Caco-2 (cell line): ENCODE measurements at regions of chr2 and their contacts with region 1.

Region 1: GRCh38 chr2:21270708-21271122 is 146.9 kb downstream of the TDRD15 start:
- DNase-seq: peak; percentile 25 to 44
- H3K4me3 ChIP-seq: no peak overlapping the region
- H3K4me3 Mint-ChIP-seq: peak overlapping the region; percentile 44
- H3K27ac Mint-ChIP-seq: peak overlapping the region; percentile 92
- H3K4me1 ChIP-seq: peaks cover 53% of the 10 kb centered on the region
- H3K4me1 Mint-ChIP-seq: peaks cover 63% of the 10 kb centered on the region
- H3K27me3 ChIP-seq: no peaks in the 10 kb centered on the region
- H3K27me3 Mint-ChIP-seq: no peaks in the 10 kb centered on the region
- CTCF ChIP-seq: no peak

Region 2: DNA sequence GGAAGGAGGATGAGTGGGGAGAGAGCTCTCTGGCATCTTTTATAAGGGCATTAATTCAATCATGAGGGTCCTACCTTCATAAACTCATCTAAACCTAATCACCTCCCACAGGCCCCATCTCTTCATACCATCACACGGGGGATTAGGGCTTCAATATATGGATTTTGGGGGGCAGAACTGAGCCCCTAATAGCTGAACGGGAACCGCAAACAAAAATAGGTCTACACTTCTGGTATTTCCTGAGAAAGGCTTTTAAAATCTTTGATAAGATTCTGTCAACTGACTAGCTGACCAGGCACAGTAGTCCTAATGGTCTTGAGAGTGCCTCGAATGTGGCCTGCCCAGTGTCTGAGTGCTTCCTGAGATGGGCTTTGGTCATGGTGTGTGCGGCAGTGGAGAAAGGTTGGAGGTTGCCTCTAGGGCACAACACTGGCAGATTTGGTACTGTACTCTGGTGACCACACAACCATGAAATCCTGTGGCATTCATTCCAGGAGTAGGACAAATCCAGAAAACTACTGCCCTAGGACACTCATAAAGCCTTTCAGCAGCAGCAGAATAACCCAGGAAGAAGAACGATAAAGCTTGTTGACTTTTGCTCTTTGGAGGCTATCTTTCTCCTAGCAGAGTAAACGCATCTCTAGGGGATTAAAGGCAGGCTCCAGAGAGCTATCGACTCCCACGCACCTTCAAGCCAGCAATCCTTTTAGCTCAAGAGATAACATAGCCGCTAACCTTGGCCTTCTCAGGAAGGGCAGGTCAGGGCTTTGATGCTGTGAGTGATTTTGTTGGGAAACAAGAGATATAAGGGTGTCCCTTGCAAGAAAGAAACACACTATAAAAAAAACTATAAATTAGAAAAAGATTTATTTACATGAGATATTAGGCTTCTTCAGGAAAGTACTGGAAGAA is 214.6 kb before region 1 on chr2:
- CTCF ChIA-PET with region 1: no interaction called
- POLR2A ChIA-PET with region 1: no interaction called
- intact Hi-C with region 1: loop called (anchors 5 kb)
- DNase-seq: peak; percentile 62 to 77
- H3K4me3 ChIP-seq: no peak overlapping the region
- H3K4me3 Mint-ChIP-seq: no peak overlapping the region
- H3K27ac Mint-ChIP-seq: no peak overlapping the region
- H3K4me1 ChIP-seq: peaks cover 21% of the 10 kb centered on the region
- H3K4me1 Mint-ChIP-seq: peaks cover 7% of the 10 kb centered on the region
- H3K27me3 ChIP-seq: no peaks in the 10 kb centered on the region
- H3K27me3 Mint-ChIP-seq: no peaks in the 10 kb centered on the region
- CTCF ChIP-seq: no peak

Region 3: DNA sequence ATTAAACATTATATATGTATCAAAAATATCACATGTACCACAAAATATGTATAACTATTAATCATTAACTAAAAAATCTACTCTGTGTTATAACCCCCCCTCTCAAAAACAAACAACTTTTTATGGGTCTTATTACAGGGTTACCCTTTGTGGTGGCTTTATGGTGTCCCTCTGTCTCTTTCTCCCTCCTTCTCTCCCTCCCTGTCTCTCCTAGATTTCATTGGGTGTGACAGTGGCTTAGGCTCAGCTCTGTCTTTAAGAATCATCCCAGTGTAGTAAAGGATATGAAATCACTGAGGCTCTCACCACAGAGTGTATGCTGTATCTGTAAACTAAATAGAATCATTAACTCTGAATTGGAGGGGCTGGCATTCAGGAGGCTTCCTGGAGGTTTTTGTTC is 53.3 kb before region 1 on chr2:
- CTCF ChIA-PET with region 1: no interaction called
- POLR2A ChIA-PET with region 1: no interaction called
- intact Hi-C with region 1: no loop called
- DNase-seq: peak in 1 of 2 experiments; percentile 2
- H3K4me3 ChIP-seq: no peak overlapping the region
- H3K4me3 Mint-ChIP-seq: no peak overlapping the region
- H3K27ac Mint-ChIP-seq: no peak overlapping the region
- H3K4me1 ChIP-seq: peaks cover 10% of the 10 kb centered on the region
- H3K4me1 Mint-ChIP-seq: peaks cover 15% of the 10 kb centered on the region
- H3K27me3 ChIP-seq: no peaks in the 10 kb centered on the region
- H3K27me3 Mint-ChIP-seq: no peaks in the 10 kb centered on the region
- CTCF ChIP-seq: no peak

Region 4: DNA sequence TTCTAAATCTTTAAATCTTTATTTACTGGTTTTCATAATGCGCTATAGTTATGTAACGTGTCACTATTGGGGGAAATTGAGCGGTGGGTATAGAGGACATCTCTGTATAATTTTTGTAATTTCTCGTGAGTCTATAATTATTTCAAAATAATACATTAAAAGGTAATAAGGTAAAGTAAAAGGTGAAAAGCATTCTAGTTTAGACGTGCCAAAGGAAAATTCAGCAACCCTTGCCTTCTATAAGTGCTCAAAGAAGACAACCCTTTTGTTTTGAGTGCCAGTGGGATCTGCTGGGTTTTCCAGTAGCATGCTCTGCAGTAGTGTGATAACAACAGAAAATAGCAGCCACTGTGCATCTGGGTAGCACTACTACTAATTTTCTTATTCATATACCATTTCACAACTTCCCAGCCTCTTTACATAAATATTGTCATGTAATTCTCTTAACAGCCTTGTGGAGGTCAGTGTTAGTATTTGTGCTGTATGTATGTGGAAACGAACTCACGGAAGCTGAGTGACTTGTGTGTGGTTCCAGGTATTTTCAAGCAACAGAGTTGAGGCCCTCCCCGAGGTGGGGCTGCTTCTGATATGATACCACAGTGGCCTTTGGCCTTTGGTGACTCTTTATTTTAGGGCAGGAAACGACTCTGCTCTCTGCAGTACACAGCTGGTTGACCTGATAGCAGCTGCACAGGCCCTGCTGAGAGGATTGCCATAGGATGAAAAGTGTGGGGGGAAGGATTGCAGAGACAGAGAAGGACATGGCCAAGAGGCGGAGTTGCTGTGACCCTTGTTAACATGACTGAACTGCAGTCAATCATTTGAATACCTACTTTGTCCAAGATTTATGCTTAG is 42.4 kb before region 1 on chr2:
- CTCF ChIA-PET with region 1: no interaction called
- POLR2A ChIA-PET with region 1: no interaction called
- intact Hi-C with region 1: loop called (anchors 5 kb)
- DNase-seq: peak; percentile 16 to 48
- H3K4me3 ChIP-seq: no peak overlapping the region
- H3K4me3 Mint-ChIP-seq: no peak overlapping the region
- H3K27ac Mint-ChIP-seq: peak overlapping the region; percentile 31
- H3K4me1 ChIP-seq: peaks cover 16% of the 10 kb centered on the region
- H3K4me1 Mint-ChIP-seq: peaks cover 7% of the 10 kb centered on the region
- H3K27me3 ChIP-seq: no peaks in the 10 kb centered on the region
- H3K27me3 Mint-ChIP-seq: no peaks in the 10 kb centered on the region
- CTCF ChIP-seq: no peak

Region 5: GRCh38 chr2:21288739-21289520 is 18.2 kb after region 1 on chr2:
- CTCF ChIA-PET with region 1: no interaction called
- POLR2A ChIA-PET with region 1: interaction called, 4 read pairs
- intact Hi-C with region 1: loop called (anchors 1 kb)
- DNase-seq: no peak
- H3K4me3 ChIP-seq: no peak overlapping the region
- H3K4me3 Mint-ChIP-seq: no peak overlapping the region
- H3K27ac Mint-ChIP-seq: no peak overlapping the region
- H3K4me1 ChIP-seq: peaks cover 23% of the 10 kb centered on the region
- H3K4me1 Mint-ChIP-seq: peaks cover 12% of the 10 kb centered on the region
- H3K27me3 ChIP-seq: no peaks in the 10 kb centered on the region
- H3K27me3 Mint-ChIP-seq: no peaks in the 10 kb centered on the region
- CTCF ChIP-seq: no peak

Region 6: GRCh38 chr2:21307037-21307436 is 36.3 kb after region 1 on chr2:
- CTCF ChIA-PET with region 1: interaction called, 7 read pairs
- POLR2A ChIA-PET with region 1: no interaction called
- intact Hi-C with region 1: loop called (anchors 1 kb)
- DNase-seq: peak; percentile 64 to 73
- H3K4me3 ChIP-seq: no peak overlapping the region
- H3K4me3 Mint-ChIP-seq: no peak overlapping the region
- H3K27ac Mint-ChIP-seq: no peak overlapping the region
- H3K4me1 ChIP-seq: peaks cover 35% of the 10 kb centered on the region
- H3K4me1 Mint-ChIP-seq: peaks cover under 1% of the 10 kb centered on the region
- H3K27me3 ChIP-seq: no peaks in the 10 kb centered on the region; the same call in 1 of the 2 replicates
- H3K27me3 Mint-ChIP-seq: no peaks in the 10 kb centered on the region
- CTCF ChIP-seq: no peak

Region 7: GRCh38 chr2:21317131-21317530 is 46.4 kb after region 1 on chr2:
- CTCF ChIA-PET with region 1: interaction called, 12 read pairs
- POLR2A ChIA-PET with region 1: no interaction called
- intact Hi-C with region 1: loop called (anchors 2 kb)
- DNase-seq: peak; percentile 48 to 70
- H3K4me3 ChIP-seq: no peak overlapping the region
- H3K4me3 Mint-ChIP-seq: no peak overlapping the region
- H3K27ac Mint-ChIP-seq: peak overlapping the region; percentile 57
- H3K4me1 ChIP-seq: peaks cover 14% of the 10 kb centered on the region
- H3K4me1 Mint-ChIP-seq: peaks cover 10% of the 10 kb centered on the region
- H3K27me3 ChIP-seq: no peaks in the 10 kb centered on the region
- H3K27me3 Mint-ChIP-seq: no peaks in the 10 kb centered on the region
- CTCF ChIP-seq: peak; percentile 66 to 73